ENCODE measurements at regions of chr1 and their contacts with region 1.

Region 1: GRCh38 chr1:24022581-24023361 is 42.6 kb upstream of the SRSF10 start:
- DNase-seq: peak; percentile 37
- H3K4me3 ChIP-seq: no peak overlapping the region
- H3K27ac ChIP-seq: peak overlapping the region; percentile 92 to 96 (median 93)
- H3K4me1 ChIP-seq: peaks cover 30 to 60% (median 54%) of the 10 kb centered on the region in 4 donors
- H3K27me3 ChIP-seq: no peaks in the 10 kb centered on the region
- CTCF ChIP-seq: no peak
- EP300 ChIP-seq: no peak
- POLR2A ChIP-seq: no peak

Region 2: DNA sequence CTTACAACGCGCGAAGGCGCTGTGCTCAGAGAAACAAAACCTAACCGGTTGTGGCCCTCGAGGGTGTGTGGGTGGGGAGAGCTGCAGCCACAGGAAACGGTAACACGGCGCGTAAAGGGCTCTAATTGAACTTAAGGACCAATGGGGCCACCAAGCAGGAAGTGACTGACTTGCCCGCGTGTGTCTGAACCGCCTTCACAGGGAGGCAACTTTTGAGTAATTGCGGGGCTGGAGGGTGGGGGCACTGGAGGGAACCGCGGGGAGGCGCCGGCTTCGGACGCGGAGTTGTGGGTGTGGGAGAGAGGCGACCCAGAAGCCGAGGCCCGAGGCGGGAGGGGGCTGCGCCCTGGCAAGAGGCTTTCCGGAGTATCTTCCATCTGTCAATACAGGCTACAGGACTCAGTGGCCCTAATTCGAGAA is 63.7 kb before region 1 on chr1:
- in situ Hi-C with region 1: no loop called
- intact Hi-C with region 1: loop called (anchors 5 kb)
- DNase-seq: peak; percentile 93
- H3K4me3 ChIP-seq: peak overlapping the region; percentile 49 to 89 (median 78)
- H3K27ac ChIP-seq: peak overlapping the region; percentile 96 to 99 (median 98)
- H3K4me1 ChIP-seq: peaks cover 11 to 50% (median 27%) of the 10 kb centered on the region in 4 donors
- H3K27me3 ChIP-seq: no peaks in the 10 kb centered on the region
- CTCF ChIP-seq: peak in 3 of 5 experiments; percentile 20 to 52 (median 21)
- EP300 ChIP-seq: no peak
- POLR2A ChIP-seq: peak; percentile 42

Region 3: DNA sequence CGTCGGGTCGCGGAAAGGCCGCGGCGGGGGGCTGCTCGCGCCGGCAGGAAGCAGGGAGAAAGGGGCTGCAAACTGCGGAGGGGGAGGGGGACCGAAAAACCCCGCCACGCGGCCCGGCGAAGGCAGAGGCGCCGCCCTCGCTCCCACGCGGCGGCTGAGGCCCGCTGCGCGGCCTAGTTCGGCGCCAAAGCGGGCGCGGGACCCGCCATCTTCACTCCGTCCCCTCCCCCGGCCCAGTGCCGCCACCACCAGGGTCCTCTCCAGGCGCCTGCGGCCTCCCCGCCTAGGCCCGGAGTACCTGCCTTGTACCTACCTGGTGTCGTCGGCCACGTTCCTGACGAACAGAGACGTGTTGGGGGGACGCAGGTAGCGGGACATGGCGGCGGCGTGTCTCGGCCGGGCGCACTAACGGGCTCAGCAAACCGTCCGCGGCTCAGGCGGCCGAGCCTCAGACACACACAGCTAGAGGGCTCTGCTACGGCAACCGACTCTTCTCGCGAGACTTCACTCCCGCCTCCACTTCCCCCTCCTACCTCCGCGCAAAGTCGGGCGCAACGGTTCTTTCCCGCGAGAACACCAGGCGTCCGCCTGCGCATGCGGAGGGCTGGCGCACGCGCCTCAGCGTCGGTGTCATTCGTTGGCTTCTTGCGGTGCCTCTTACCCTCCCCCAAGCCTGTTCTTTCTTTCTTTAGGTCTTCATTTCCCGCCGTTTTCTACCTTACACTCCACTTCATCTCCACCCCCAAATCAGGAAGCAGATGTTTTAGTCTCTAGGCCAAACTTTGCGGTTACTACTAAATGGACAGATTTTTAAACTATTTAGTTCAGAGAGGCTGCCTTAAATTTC is 42.7 kb before region 1 on chr1 and contains the start of gene SRSF10:
- in situ Hi-C with region 1: no loop called
- intact Hi-C with region 1: loop called (anchors 5 kb)
- DNase-seq: peak; percentile 99
- H3K4me3 ChIP-seq: peak within 1 kb of the TSS; percentile 74 to 97 (median 90)
- H3K27ac ChIP-seq: peak within 1 kb of the TSS; percentile 95 to 98 (median 97)
- H3K4me1 ChIP-seq: peaks cover 26 to 67% (median 47%) of the 10 kb centered on the region in 4 donors
- H3K27me3 ChIP-seq: no peaks in the 10 kb centered on the region
- CTCF ChIP-seq: peak in 4 of 5 experiments; percentile 17 to 67 (median 32)
- EP300 ChIP-seq: no peak
- POLR2A ChIP-seq: peak; percentile 99
- total RNA-seq, gene SRSF10: 58.4 to 140 (median 91.3) TPM

Region 4: GRCh38 chr1:24045766-24046165 is 23.0 kb after region 1 on chr1:
- in situ Hi-C with region 1: no loop called
- intact Hi-C with region 1: no loop called
- DNase-seq: no peak
- H3K4me3 ChIP-seq: no peak overlapping the region
- H3K27ac ChIP-seq: peak overlapping the region; percentile 34 to 74 (median 61)
- H3K4me1 ChIP-seq: peaks cover 0 to 16% (median 8%) of the 10 kb centered on the region in 4 donors
- H3K27me3 ChIP-seq: no peaks in the 10 kb centered on the region
- CTCF ChIP-seq: no peak
- EP300 ChIP-seq: no peak
- POLR2A ChIP-seq: no peak

Region 5: DNA sequence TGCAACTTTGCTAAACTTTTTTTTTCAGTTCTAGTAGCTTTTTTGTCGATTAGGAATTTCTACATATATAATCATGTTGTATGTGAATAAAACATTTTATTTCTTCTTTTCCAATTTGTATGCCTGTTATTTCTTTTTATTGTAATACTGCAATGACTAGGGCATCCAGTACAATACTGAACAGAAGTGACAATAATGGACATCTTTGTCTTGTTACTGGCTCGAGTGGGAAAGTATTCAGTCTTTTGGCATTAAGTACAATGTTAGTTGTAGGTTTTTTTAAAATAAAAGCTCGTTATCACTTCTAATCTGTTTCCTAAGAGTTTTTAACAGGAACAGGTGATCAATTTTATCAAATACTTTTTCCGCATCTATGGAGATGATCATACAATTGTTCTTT is 381.0 kb after region 1 on chr1:
- in situ Hi-C with region 1: no loop called
- intact Hi-C with region 1: no loop called
- DNase-seq: no peak
- H3K4me3 ChIP-seq: no peak overlapping the region
- H3K27ac ChIP-seq: no peak overlapping the region
- H3K4me1 ChIP-seq: no peaks in the 10 kb centered on the region
- H3K27me3 ChIP-seq: no peaks in the 10 kb centered on the region
- CTCF ChIP-seq: no peak
- EP300 ChIP-seq: no peak
- POLR2A ChIP-seq: no peak